IMR-90 (cell line): ENCODE measurements at regions of chr10 and their contacts with region 1.

Region 1: GRCh38 chr10:19031763-19032162 is 16.8 kb upstream of the MALRD1 start:
- DNase-seq: no peak
- ATAC-seq: no peak
- H3K4me3 ChIP-seq: no peak overlapping the region
- H3K27ac ChIP-seq: no peak overlapping the region
- H3K4me1 ChIP-seq: no peaks in the 10 kb centered on the region
- H3K27me3 ChIP-seq: no peaks in the 10 kb centered on the region
- CTCF ChIP-seq: no peak
- POLR2A ChIP-seq: no peak
- RAD21 ChIP-seq: no peak

Region 2: DNA sequence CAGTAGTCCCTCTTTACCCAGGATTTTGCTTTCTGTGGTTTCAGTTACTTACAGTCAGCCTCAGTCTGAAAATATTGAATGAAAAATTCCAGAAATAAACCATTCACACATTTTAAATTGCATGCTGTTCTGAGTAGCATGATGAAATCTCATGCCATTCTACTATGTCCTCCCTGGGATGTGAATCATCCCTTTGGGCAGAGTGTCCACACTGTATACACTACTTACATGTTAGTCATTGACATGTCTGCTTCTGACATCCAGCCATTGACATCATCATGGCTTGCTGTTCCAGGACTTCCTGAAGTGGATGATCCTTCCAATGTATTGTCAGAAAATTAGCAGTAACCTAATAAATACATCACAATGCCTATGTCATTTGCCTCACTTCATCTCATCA is 17.7 kb before region 1 on chr10:
- CTCF ChIA-PET with region 1: no interaction called
- POLR2A ChIA-PET with region 1: no interaction called
- dilution Hi-C with region 1: no loop called
- in situ Hi-C with region 1: no loop called
- intact Hi-C with region 1: no loop called
- DNase-seq: peak; percentile 97
- ATAC-seq: peak; percentile 97
- H3K4me3 ChIP-seq: no peak overlapping the region
- H3K27ac ChIP-seq: no peak overlapping the region
- H3K4me1 ChIP-seq: no peaks in the 10 kb centered on the region; the same call in 1 of the 2 replicates
- H3K27me3 ChIP-seq: no peaks in the 10 kb centered on the region
- CTCF ChIP-seq: no peak
- POLR2A ChIP-seq: no peak
- RAD21 ChIP-seq: no peak

Region 3: DNA sequence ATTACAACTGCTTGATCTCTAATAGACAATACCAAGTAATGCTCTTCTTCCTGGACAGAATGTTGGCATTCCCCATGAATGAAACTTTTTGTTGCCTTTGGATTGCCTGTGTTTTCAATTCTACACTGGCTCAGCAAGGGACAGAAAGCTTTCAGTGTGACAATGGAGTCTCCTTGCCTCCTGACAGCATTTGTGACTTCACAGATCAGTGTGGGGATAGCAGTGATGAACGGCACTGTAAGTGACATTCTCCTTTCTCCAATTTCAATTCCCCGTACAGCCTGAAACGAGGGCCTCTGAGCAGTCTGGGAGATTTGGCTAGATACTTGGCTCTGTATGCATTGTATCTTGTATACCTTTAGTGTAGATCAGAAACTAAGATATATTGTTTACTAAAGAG is 17.1 kb after region 1 on chr10:
- CTCF ChIA-PET with region 1: no interaction called
- POLR2A ChIA-PET with region 1: interaction called, 12 read pairs
- dilution Hi-C with region 1: no loop called
- in situ Hi-C with region 1: no loop called
- intact Hi-C with region 1: no loop called
- DNase-seq: no peak
- ATAC-seq: no peak
- H3K4me3 ChIP-seq: no peak overlapping the region
- H3K27ac ChIP-seq: no peak overlapping the region
- H3K4me1 ChIP-seq: no peaks in the 10 kb centered on the region
- H3K27me3 ChIP-seq: no peaks in the 10 kb centered on the region
- CTCF ChIP-seq: no peak
- POLR2A ChIP-seq: no peak
- RAD21 ChIP-seq: no peak

Region 4: GRCh38 chr10:19144206-19144605 is 112.4 kb after region 1 on chr10:
- CTCF ChIA-PET with region 1: no interaction called
- POLR2A ChIA-PET with region 1: no interaction called
- dilution Hi-C with region 1: no loop called
- in situ Hi-C with region 1: no loop called
- intact Hi-C with region 1: no loop called
- DNase-seq: no peak
- ATAC-seq: no peak
- H3K4me3 ChIP-seq: no peak overlapping the region
- H3K27ac ChIP-seq: no peak overlapping the region
- H3K4me1 ChIP-seq: no peaks in the 10 kb centered on the region
- H3K27me3 ChIP-seq: no peaks in the 10 kb centered on the region
- CTCF ChIP-seq: no peak
- POLR2A ChIP-seq: no peak
- RAD21 ChIP-seq: no peak